ENCODE measurements at regions of chr17 and their contacts with region 1.

Region 1: GRCh38 chr17:2303204-2304188 is at the starts of genes SMG6 and SRR:
- DNase-seq: peak; percentile 59 to 90
- H3K4me3 ChIP-seq: peak within 1 kb of the TSS; percentile 69 to 93 (median 90)
- H3K27ac ChIP-seq: peak within 1 kb of the TSS; percentile 82
- H3K4me1 ChIP-seq: peaks cover 0 to 2% (median 0%) of the 10 kb centered on the region in 4 experiments; a peak in 2 of 7 replicates
- H3K27me3 ChIP-seq: no peaks in the 10 kb centered on the region
- CTCF ChIP-seq: no peak
- EP300 ChIP-seq: no peak
- POLR2A ChIP-seq: peak; percentile 91 to 93
- RAD21 ChIP-seq: no peak
- total RNA-seq, gene SMG6: 25.2 and 27.2 TPM in 2 replicates
- total RNA-seq, gene SRR: 4.5 and 5.1 TPM in 2 replicates

Region 2: GRCh38 chr17:2323629-2324314 is 20.3 kb after region 1 on chr17:
- CTCF ChIA-PET with region 1: interaction called, 3 read pairs
- POLR2A ChIA-PET with region 1: interaction called, 21 read pairs
- DNase-seq: no peak
- H3K4me3 ChIP-seq: no peak overlapping the region
- H3K27ac ChIP-seq: no peak overlapping the region
- H3K4me1 ChIP-seq: no peaks in the 10 kb centered on the region
- H3K27me3 ChIP-seq: no peaks in the 10 kb centered on the region
- CTCF ChIP-seq: no peak
- EP300 ChIP-seq: no peak
- POLR2A ChIP-seq: no peak
- RAD21 ChIP-seq: no peak

Region 3: GRCh38 chr17:2331303-2331702 is 27.8 kb after region 1 on chr17:
- CTCF ChIA-PET with region 1: no interaction called
- POLR2A ChIA-PET with region 1: interaction called, 15 read pairs
- DNase-seq: no peak
- H3K4me3 ChIP-seq: no peak overlapping the region
- H3K27ac ChIP-seq: no peak overlapping the region
- H3K4me1 ChIP-seq: peaks cover 3 to 18% (median 9%) of the 10 kb centered on the region in 4 experiments; a peak in 6 of 7 replicates
- H3K27me3 ChIP-seq: no peaks in the 10 kb centered on the region
- CTCF ChIP-seq: no peak
- EP300 ChIP-seq: no peak
- POLR2A ChIP-seq: peak; percentile 35 to 49
- RAD21 ChIP-seq: no peak

Measured in H1 (cell line).